ENCODE measurements at regions of chr5 and their contacts with region 1.

Region 1: DNA sequence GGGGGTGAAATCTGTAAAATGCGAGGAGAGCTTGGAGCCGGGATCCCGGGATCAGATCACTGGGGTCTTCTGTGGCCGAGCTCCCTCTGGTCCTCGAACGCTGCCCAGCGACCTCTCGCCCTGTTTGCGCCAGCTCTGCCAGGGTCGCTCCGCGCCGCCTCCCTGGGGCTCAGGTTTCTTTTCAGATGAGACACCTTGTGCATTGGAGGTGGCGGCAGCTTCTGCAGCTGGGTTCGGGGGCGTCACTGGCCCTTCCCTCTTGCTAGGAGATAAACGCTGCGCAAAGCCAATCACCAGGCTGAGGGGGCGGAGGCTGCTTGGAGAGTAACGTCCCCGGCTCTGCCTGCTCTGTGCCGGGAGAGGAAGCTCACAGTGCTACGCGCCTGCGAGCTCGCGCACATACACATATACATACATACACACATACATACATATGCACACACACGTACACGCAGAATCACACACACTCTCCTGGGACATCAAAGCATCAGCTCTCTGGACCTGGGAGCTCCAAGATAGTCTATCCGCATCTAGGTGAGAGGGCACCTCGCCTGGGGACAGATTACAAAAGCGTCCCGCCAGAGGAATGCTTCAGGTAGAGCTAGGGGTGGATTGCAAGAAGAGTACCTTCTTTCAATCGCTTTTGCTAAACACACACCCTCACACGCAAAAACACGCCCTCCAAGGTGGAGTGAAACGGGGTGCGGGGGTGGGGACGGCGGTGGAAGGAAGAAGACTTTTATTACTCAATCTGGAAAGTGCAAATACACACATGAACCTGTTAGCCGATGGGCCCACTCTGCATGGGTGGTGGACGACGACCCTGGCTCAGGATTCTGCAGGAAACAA is at the start of gene ST8SIA4:
- DNase-seq: peak; percentile 95
- ATAC-seq: peak; percentile 75
- H3K4me3 ChIP-seq: peak within 1 kb of the TSS; percentile 82 to 100 (median 97)
- H3K4me3 Mint-ChIP-seq: peak within 1 kb of the TSS; percentile 89
- H3K27ac ChIP-seq: peak within 1 kb of the TSS; percentile 90 to 95
- H3K27ac Mint-ChIP-seq: peak within 1 kb of the TSS; percentile 96
- H3K4me1 ChIP-seq: peaks cover 27 to 38% of the 10 kb centered on the region in 2 donors
- H3K4me1 Mint-ChIP-seq: peaks cover 46% of the 10 kb centered on the region
- H3K27me3 ChIP-seq: no peaks in the 10 kb centered on the region
- H3K27me3 Mint-ChIP-seq: no peaks in the 10 kb centered on the region
- CTCF ChIP-seq: no peak
- total RNA-seq, gene ST8SIA4: 42.6 and 49.3 TPM in 2 replicates

Region 2: DNA sequence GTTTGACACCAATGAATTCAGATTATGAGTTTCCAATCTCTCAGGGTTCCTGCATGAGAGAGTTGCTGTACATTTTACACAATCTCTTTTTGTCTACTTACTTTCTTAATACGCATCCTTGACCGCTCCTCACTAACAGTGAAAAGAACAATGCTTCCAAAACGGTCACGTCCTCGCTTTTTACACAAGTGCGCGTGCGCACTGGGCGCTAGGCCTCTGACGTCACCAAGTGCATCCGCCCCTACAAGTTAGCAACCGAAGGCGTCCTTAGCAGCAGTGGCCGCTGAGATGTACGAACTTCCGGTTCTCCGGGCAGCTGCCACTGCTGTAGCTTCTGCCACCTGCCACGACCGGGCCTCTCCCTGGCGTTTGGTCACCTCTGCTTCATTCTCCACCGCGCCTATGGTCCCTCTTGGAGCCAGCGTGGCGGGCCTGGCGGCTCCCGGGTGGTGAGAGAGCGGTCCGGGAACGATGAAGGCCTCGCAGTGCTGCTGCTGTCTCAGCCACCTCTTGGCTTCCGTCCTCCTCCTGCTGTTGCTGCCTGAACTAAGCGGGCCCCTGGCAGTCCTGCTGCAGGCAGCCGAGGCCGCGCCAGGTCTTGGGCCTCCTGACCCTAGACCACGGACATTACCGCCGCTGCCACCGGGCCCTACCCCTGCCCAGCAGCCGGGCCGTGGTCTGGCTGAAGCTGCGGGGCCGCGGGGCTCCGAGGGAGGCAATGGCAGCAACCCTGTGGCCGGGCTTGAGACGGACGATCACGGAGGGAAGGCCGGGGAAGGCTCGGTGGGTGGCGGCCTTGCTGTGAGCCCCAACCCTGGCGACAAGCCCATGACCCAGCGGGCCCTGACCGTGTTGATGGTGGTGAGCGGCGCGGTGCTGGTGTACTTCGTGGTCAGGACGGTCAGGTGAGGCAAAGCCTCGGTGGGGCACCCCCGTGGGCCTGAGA is 367.9 kb before region 1 on chr5 and contains the start of gene FAM174A:
- CTCF ChIA-PET with region 1: interaction called, 3 read pairs
- POLR2A ChIA-PET with region 1: no interaction called
- intact Hi-C with region 1: loop called (anchors 1 kb)
- DNase-seq: peak; percentile 97
- ATAC-seq: peak; percentile 91
- H3K4me3 ChIP-seq: peak within 1 kb of the TSS; percentile 57 to 84 (median 83)
- H3K4me3 Mint-ChIP-seq: peak within 1 kb of the TSS; percentile 91
- H3K27ac ChIP-seq: peak within 1 kb of the TSS; percentile 82 to 87
- H3K27ac Mint-ChIP-seq: peak within 1 kb of the TSS; percentile 95
- H3K4me1 ChIP-seq: peaks cover 17 to 19% of the 10 kb centered on the region in 2 donors
- H3K4me1 Mint-ChIP-seq: peaks cover 19% of the 10 kb centered on the region
- H3K27me3 ChIP-seq: no peaks in the 10 kb centered on the region
- H3K27me3 Mint-ChIP-seq: peaks cover 3% of the 10 kb centered on the region
- CTCF ChIP-seq: no peak
- total RNA-seq, gene FAM174A: 6.1 TPM in 2 replicates

Region 3: DNA sequence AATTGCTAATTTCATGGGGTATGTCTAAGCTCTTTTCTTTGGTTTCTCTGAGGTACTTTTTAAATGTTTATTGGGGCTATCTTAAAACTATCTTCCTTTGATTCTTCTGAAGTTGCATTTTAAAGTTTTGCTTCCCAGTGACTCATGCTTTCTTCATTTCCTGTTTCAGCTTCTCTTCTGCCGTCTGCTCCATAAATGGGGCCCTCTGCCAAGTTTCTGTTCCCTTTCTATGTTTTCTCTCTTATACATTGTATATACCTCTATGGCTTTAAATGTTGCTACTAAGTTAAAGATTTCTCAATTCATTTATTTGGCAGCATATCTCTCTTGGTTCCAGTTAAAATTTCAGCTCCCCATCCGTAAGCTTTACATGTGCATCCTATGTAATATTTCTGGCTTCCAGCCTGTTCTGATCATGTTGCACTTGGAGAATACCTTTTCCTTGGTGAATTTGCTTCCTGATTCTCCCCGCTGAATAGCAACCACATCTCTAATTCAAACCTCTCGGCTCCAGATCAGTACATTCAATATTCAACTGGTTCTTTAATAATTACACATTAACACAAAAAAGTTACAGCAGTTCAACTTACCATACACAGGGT is 125.5 kb before region 1 on chr5:
- CTCF ChIA-PET with region 1: interaction called, 92 read pairs
- POLR2A ChIA-PET with region 1: interaction called, 7 read pairs
- intact Hi-C with region 1: loop called (anchors 1 kb)
- DNase-seq: peak; percentile 79
- ATAC-seq: peak; percentile 62
- H3K4me3 ChIP-seq: peak overlapping the region in 2 of 5 experiments; percentile 5 to 28
- H3K4me3 Mint-ChIP-seq: peak overlapping the region; percentile 32
- H3K27ac ChIP-seq: peak overlapping the region; percentile 44 to 60
- H3K27ac Mint-ChIP-seq: peak overlapping the region; percentile 47
- H3K4me1 ChIP-seq: peaks cover 32 to 37% of the 10 kb centered on the region in 2 donors
- H3K4me1 Mint-ChIP-seq: peaks cover 52% of the 10 kb centered on the region
- H3K27me3 ChIP-seq: no peaks in the 10 kb centered on the region
- H3K27me3 Mint-ChIP-seq: no peaks in the 10 kb centered on the region
- CTCF ChIP-seq: no peak

Region 4: GRCh38 chr5:100840384-100840783 is 62.9 kb before region 1 on chr5:
- CTCF ChIA-PET with region 1: interaction called, 41 read pairs
- POLR2A ChIA-PET with region 1: interaction called, 4 read pairs
- intact Hi-C with region 1: no loop called
- DNase-seq: peak; percentile 54
- ATAC-seq: peak; percentile 61
- H3K4me3 ChIP-seq: no peak overlapping the region
- H3K4me3 Mint-ChIP-seq: peak overlapping the region; percentile 74
- H3K27ac ChIP-seq: peak overlapping the region in 1 of 2 donors; percentile 62
- H3K27ac Mint-ChIP-seq: no peak overlapping the region
- H3K4me1 ChIP-seq: peaks cover 14 to 23% of the 10 kb centered on the region in 2 donors
- H3K4me1 Mint-ChIP-seq: peaks cover 70% of the 10 kb centered on the region
- H3K27me3 ChIP-seq: no peaks in the 10 kb centered on the region
- H3K27me3 Mint-ChIP-seq: no peaks in the 10 kb centered on the region
- CTCF ChIP-seq: no peak

Region 5: DNA sequence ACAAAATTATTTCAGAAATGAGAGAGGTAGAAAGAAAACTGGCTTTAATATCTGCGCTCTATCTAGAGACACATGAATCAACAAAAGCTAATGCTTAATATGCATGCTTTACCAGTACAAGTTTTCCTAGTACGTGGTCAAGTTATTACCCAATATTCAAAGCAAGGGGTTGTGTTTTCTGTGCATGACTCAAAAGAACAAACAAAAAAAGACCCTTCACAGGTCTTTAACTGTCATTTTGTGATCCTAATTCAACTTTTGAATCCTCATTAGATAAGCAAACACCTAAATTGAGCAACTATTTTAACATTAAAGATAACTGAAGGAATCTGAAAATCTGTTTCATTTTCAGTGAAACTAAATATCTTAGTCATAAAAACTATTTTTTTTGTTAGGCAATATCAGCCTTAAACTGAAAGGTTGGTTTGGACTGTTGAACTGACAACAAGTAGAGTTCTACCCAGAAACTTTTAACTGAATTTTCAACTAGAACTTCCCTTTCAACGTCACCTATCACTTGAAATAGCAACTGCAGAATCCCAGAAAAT is 12.7 kb before region 1 on chr5:
- CTCF ChIA-PET with region 1: interaction called, 16 read pairs
- POLR2A ChIA-PET with region 1: interaction called, 3 read pairs
- intact Hi-C with region 1: loop called (anchors 1 kb)
- DNase-seq: peak; percentile 28
- ATAC-seq: no peak
- H3K4me3 ChIP-seq: peak overlapping the region in 1 of 5 experiments; percentile 57
- H3K4me3 Mint-ChIP-seq: peak overlapping the region; percentile 84
- H3K27ac ChIP-seq: peak overlapping the region; percentile 65 to 94
- H3K27ac Mint-ChIP-seq: peak overlapping the region; percentile 90
- H3K4me1 ChIP-seq: peaks cover 12 to 45% of the 10 kb centered on the region in 2 donors
- H3K4me1 Mint-ChIP-seq: peaks cover 59% of the 10 kb centered on the region
- H3K27me3 ChIP-seq: no peaks in the 10 kb centered on the region
- H3K27me3 Mint-ChIP-seq: no peaks in the 10 kb centered on the region
- CTCF ChIP-seq: no peak

Measured in B cell (primary cell).